Activated T-helper 1 cell treated with anti-CD3 and anti-CD28 coated beads, Interleukin-12 subunit alpha, Interleukin-12 subunit beta, Interleukin-2, Interleukin-4 antibody, amounts not matched to agents 30 ng/mL and 10 ng/mL and 1 ng/mL, durations not matched to agents 14 hours and 24 hours and 36 hours (primary cell): ENCODE measurements at regions of chr22 and their contacts with region 1.

Region 1: GRCh38 chr22:42863349-42863961 is 6.4 kb upstream of the ARFGAP3 start:
- DNase-seq: no peak
- H3K4me3 Mint-ChIP-seq: no peak overlapping the region
- H3K27ac Mint-ChIP-seq: peak overlapping the region; percentile 93
- H3K4me1 Mint-ChIP-seq: peaks cover 13% of the 10 kb centered on the region
- H3K27me3 Mint-ChIP-seq: no peaks in the 10 kb centered on the region

Region 2: GRCh38 chr22:42614312-42615091 is 249.0 kb before region 1 on chr22 and contains the start of gene POLDIP3:
- intact Hi-C with region 1: loop called (anchors 1 kb)
- DNase-seq: peak; percentile 98
- H3K4me3 Mint-ChIP-seq: peak within 1 kb of the TSS; percentile 92
- H3K27ac Mint-ChIP-seq: peak within 1 kb of the TSS; percentile 98
- H3K4me1 Mint-ChIP-seq: peaks cover 33% of the 10 kb centered on the region
- H3K27me3 Mint-ChIP-seq: no peaks in the 10 kb centered on the region
- total RNA-seq, gene POLDIP3: 77.9 and 87.2 TPM in 2 replicates

Region 3: DNA sequence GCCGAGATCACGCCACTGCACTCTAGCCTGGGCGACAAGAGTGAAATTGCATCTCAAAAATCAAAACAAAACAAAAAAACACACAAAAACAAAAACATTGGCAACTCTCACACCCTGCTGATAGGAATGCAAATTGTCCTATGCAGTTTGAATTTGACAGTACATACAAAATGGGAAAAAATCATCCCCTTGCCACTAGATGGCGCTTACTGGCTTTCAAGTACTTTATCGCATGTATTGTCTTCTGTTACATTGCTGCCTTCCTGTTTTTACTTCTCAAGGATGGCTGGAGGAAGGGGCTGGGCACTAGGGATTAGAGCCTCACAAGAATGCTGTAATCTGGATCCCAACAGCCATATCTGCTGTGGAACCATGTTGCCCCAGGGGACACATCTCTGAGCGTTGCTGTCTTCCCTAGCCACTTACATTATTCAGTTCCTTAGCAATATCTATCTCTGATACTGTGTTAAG is 83.3 kb before region 1 on chr22:
- intact Hi-C with region 1: loop called (anchors 1 kb)
- DNase-seq: peak; percentile 23
- H3K4me3 Mint-ChIP-seq: no peak overlapping the region
- H3K27ac Mint-ChIP-seq: no peak overlapping the region
- H3K4me1 Mint-ChIP-seq: no peaks in the 10 kb centered on the region
- H3K27me3 Mint-ChIP-seq: no peaks in the 10 kb centered on the region

Region 4: DNA sequence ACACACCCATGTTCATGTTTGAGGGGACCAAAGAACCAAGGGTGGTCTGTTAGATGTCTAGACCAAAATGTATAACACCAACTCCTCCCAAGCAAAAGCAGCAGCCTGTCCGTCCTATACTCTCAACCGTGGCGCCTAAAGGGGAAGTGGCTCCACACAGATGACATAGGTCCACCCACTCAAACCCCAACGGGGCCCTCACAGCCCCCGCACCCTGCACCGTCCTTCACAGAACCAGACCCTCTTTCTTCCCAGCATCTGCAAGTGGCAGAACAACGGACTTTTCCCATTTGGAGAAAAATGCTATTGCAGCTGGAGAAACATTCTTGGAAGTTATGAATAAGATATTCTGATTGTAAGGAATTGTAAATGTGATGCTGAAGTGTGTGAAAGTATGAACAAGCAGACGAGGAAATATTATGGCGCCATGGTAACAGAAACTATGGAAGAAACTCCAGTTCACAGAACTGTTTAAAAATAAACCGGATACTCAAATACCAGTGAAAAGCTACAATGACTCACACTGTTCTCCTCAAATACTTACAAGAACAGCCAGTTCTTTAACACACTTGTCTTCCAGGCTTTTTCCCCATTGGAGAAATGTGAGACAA is 70.1 kb after region 1 on chr22:
- intact Hi-C with region 1: loop called (anchors 1 kb)
- DNase-seq: no peak
- H3K4me3 Mint-ChIP-seq: peak overlapping the region; percentile 61
- H3K27ac Mint-ChIP-seq: peak overlapping the region; percentile 91
- H3K4me1 Mint-ChIP-seq: peaks cover 71% of the 10 kb centered on the region
- H3K27me3 Mint-ChIP-seq: no peaks in the 10 kb centered on the region

Region 5: DNA sequence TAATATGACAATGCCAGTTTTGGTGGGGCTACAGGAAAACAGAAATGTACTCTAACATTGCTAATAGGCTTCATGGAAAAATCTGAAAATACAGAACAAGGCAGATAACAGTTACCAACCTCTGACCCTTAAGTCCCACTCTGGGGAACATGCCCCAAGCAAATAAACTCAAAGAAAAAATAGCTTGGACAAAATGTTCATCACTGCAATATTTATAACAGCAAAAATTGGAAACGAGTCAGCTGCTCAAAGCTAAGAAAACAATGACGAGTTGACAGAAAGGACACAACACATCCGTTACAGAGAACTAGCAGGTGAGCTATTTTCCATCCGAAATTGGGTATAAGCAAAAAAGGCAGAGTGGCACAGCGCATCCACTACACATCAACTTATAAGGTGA is 81.0 kb after region 1 on chr22:
- intact Hi-C with region 1: no loop called
- DNase-seq: no peak
- H3K4me3 Mint-ChIP-seq: no peak overlapping the region
- H3K27ac Mint-ChIP-seq: no peak overlapping the region
- H3K4me1 Mint-ChIP-seq: peaks cover 28% of the 10 kb centered on the region
- H3K27me3 Mint-ChIP-seq: peaks cover 1% of the 10 kb centered on the region

Region 6: DNA sequence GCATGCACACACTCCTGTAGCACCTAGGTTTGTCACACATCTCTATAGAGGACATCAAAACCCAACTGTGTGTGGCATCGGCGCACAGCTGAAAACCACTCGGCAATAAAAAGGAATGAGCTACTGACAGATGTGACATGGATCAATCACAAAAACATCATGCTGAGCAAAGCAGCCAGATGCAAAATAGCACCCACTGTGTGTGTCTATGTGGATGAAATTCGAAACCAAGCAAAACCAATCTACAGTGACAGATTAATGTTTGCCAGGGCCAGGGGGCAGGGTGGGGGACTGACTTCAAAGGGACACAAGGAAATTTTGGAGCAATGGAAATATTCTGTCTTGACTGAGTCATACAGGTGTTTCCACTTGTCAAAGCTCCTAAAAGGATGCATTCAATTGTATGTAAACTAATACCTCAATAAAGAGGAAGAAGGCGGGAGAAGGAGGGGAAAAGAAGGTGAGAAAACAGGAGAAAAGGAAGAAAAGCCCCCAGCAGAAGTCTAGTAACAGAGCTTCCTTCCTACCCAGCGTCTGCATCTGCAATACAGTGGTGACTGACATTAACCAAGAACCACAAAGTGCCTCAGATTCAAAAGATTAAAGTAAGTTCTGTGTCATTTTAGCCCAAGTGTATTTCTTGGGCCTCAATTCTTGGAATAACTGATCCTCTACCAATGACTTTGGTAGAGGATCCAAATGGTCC is 101.7 kb after region 1 on chr22:
- intact Hi-C with region 1: loop called (anchors 1 kb)
- DNase-seq: no peak
- H3K4me3 Mint-ChIP-seq: no peak overlapping the region
- H3K27ac Mint-ChIP-seq: peak overlapping the region; percentile 78
- H3K4me1 Mint-ChIP-seq: peaks cover 44% of the 10 kb centered on the region
- H3K27me3 Mint-ChIP-seq: no peaks in the 10 kb centered on the region

Region 7: GRCh38 chr22:43036282-43036829 is 172.9 kb after region 1 on chr22:
- intact Hi-C with region 1: loop called (anchors 1 kb)
- DNase-seq: no peak
- H3K4me3 Mint-ChIP-seq: no peak overlapping the region
- H3K27ac Mint-ChIP-seq: no peak overlapping the region
- H3K4me1 Mint-ChIP-seq: no peaks in the 10 kb centered on the region
- H3K27me3 Mint-ChIP-seq: no peaks in the 10 kb centered on the region

Region 8: GRCh38 chr22:44455151-44455962 is 1591.9 kb after region 1 on chr22:
- intact Hi-C with region 1: no loop called
- DNase-seq: peak; percentile 34
- H3K4me3 Mint-ChIP-seq: peak overlapping the region; percentile 56
- H3K27ac Mint-ChIP-seq: peak overlapping the region; percentile 93
- H3K4me1 Mint-ChIP-seq: peaks cover 31% of the 10 kb centered on the region
- H3K27me3 Mint-ChIP-seq: peaks cover 7% of the 10 kb centered on the region